ENCODE measurements at regions of chr1 and their contacts with region 1.

Region 1: GRCh38 chr1:113928941-113929749 is at the start of gene HIPK1:
- DNase-seq: peak; percentile 86 to 96 (median 93)
- ATAC-seq: peak; percentile 65
- H3K4me3 ChIP-seq: peak within 1 kb of the TSS; percentile 89 to 93
- H3K4me3 Mint-ChIP-seq: peak within 1 kb of the TSS; percentile 99
- H3K27ac ChIP-seq: peak within 1 kb of the TSS; percentile 97 to 99
- H3K27ac Mint-ChIP-seq: peak within 1 kb of the TSS; percentile 100
- H3K4me1 ChIP-seq: peaks cover 37% of the 10 kb centered on the region
- H3K4me1 Mint-ChIP-seq: peaks cover 52% of the 10 kb centered on the region
- H3K27me3 ChIP-seq: no peaks in the 10 kb centered on the region
- H3K27me3 Mint-ChIP-seq: no peaks in the 10 kb centered on the region
- CTCF ChIP-seq: no peak
- total RNA-seq, gene HIPK1: 301 to 312 TPM

Region 2: GRCh38 chr1:112619520-112620376 is 1309.4 kb before region 1 on chr1 and contains the start of gene CAPZA1:
- CTCF ChIA-PET with region 1: no interaction called
- POLR2A ChIA-PET with region 1: no interaction called
- intact Hi-C with region 1: loop called (anchors 5 to 10 kb)
- DNase-seq: peak; percentile 83 to 96 (median 89)
- ATAC-seq: peak; percentile 65
- H3K4me3 ChIP-seq: peak within 1 kb of the TSS; percentile 85 to 88
- H3K4me3 Mint-ChIP-seq: peak within 1 kb of the TSS; percentile 98
- H3K27ac ChIP-seq: peak within 1 kb of the TSS; percentile 98 to 100
- H3K27ac Mint-ChIP-seq: peak within 1 kb of the TSS; percentile 100
- H3K4me1 ChIP-seq: peaks cover 31% of the 10 kb centered on the region
- H3K4me1 Mint-ChIP-seq: peaks cover 44% of the 10 kb centered on the region
- H3K27me3 ChIP-seq: no peaks in the 10 kb centered on the region
- H3K27me3 Mint-ChIP-seq: no peaks in the 10 kb centered on the region
- CTCF ChIP-seq: no peak
- total RNA-seq, gene CAPZA1: 185 to 196 TPM

Region 3: GRCh38 chr1:113835642-113836307 is 93.4 kb before region 1 on chr1:
- CTCF ChIA-PET with region 1: interaction called, 12 read pairs
- POLR2A ChIA-PET with region 1: interaction called, 6 read pairs
- intact Hi-C with region 1: loop called (anchors 1 kb)
- DNase-seq: peak in 4 of 9 experiments; percentile 17 to 77 (median 54)
- ATAC-seq: no peak
- H3K4me3 ChIP-seq: no peak overlapping the region
- H3K4me3 Mint-ChIP-seq: no peak overlapping the region
- H3K27ac ChIP-seq: no peak overlapping the region
- H3K27ac Mint-ChIP-seq: no peak overlapping the region
- H3K4me1 ChIP-seq: no peaks in the 10 kb centered on the region
- H3K4me1 Mint-ChIP-seq: peaks cover 7% of the 10 kb centered on the region
- H3K27me3 ChIP-seq: no peaks in the 10 kb centered on the region
- H3K27me3 Mint-ChIP-seq: no peaks in the 10 kb centered on the region
- CTCF ChIP-seq: peak; percentile 86

Region 4: GRCh38 chr1:113904674-113905434 is 24.3 kb before region 1 on chr1 and contains the starts of genes AP4B1 and DCLRE1B:
- CTCF ChIA-PET with region 1: interaction called, 61 read pairs
- POLR2A ChIA-PET with region 1: interaction called, 119 read pairs
- intact Hi-C with region 1: loop called (anchors 1 kb)
- DNase-seq: peak; percentile 93 to 100 (median 95)
- ATAC-seq: peak; percentile 92
- H3K4me3 ChIP-seq: peak within 1 kb of the TSS; percentile 83 to 85
- H3K4me3 Mint-ChIP-seq: peak within 1 kb of the TSS; percentile 99
- H3K27ac ChIP-seq: peak within 1 kb of the TSS; percentile 92 to 96
- H3K27ac Mint-ChIP-seq: peak within 1 kb of the TSS; percentile 100
- H3K4me1 ChIP-seq: peaks cover 34% of the 10 kb centered on the region
- H3K4me1 Mint-ChIP-seq: peaks cover 62% of the 10 kb centered on the region
- H3K27me3 ChIP-seq: no peaks in the 10 kb centered on the region
- H3K27me3 Mint-ChIP-seq: no peaks in the 10 kb centered on the region
- CTCF ChIP-seq: peak; percentile 65
- total RNA-seq, gene AP4B1: 63.7 to 67.3 TPM
- total RNA-seq, gene DCLRE1B: 8.1 to 9.1 TPM

Region 5: GRCh38 chr1:113949007-113949406 is 19.9 kb after region 1 on chr1:
- CTCF ChIA-PET with region 1: interaction called, 53 read pairs
- POLR2A ChIA-PET with region 1: interaction called, 40 read pairs
- intact Hi-C with region 1: loop called (anchors 1 kb)
- DNase-seq: peak in 2 of 9 experiments; percentile 48 to 59
- ATAC-seq: no peak
- H3K4me3 ChIP-seq: no peak overlapping the region
- H3K4me3 Mint-ChIP-seq: peak overlapping the region; percentile 6
- H3K27ac ChIP-seq: peak overlapping the region; percentile 31 to 65
- H3K27ac Mint-ChIP-seq: peak overlapping the region; percentile 93
- H3K4me1 ChIP-seq: peaks cover 81% of the 10 kb centered on the region
- H3K4me1 Mint-ChIP-seq: peaks cover 82% of the 10 kb centered on the region
- H3K27me3 ChIP-seq: no peaks in the 10 kb centered on the region
- H3K27me3 Mint-ChIP-seq: no peaks in the 10 kb centered on the region
- CTCF ChIP-seq: peak; percentile 68

Region 6: DNA sequence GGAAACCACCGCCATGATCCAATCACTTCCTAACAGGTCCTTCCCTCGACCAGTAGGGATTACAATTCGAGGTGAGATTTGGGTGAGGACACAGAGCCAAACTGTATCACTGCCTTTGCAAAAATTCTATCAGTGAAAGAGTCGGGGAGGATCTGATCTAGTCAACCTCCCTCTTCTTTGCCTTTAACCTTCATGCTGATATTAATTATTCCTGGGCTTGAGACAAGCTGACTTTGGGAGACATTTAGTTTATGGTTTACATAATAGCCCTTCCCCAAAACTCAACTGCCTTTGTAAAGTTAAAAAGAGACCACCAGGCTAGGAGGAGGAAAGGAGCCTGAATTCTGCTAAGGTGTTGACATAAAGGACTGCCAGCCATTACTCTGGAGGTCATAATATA is 489.1 kb after region 1 on chr1:
- CTCF ChIA-PET with region 1: no interaction called
- POLR2A ChIA-PET with region 1: no interaction called
- intact Hi-C with region 1: no loop called
- DNase-seq: no peak
- ATAC-seq: no peak
- H3K4me3 ChIP-seq: no peak overlapping the region
- H3K4me3 Mint-ChIP-seq: no peak overlapping the region
- H3K27ac ChIP-seq: no peak overlapping the region
- H3K27ac Mint-ChIP-seq: no peak overlapping the region
- H3K4me1 ChIP-seq: no peaks in the 10 kb centered on the region
- H3K4me1 Mint-ChIP-seq: peaks cover 1% of the 10 kb centered on the region
- H3K27me3 ChIP-seq: no peaks in the 10 kb centered on the region
- H3K27me3 Mint-ChIP-seq: no peaks in the 10 kb centered on the region
- CTCF ChIP-seq: no peak

Region 7: DNA sequence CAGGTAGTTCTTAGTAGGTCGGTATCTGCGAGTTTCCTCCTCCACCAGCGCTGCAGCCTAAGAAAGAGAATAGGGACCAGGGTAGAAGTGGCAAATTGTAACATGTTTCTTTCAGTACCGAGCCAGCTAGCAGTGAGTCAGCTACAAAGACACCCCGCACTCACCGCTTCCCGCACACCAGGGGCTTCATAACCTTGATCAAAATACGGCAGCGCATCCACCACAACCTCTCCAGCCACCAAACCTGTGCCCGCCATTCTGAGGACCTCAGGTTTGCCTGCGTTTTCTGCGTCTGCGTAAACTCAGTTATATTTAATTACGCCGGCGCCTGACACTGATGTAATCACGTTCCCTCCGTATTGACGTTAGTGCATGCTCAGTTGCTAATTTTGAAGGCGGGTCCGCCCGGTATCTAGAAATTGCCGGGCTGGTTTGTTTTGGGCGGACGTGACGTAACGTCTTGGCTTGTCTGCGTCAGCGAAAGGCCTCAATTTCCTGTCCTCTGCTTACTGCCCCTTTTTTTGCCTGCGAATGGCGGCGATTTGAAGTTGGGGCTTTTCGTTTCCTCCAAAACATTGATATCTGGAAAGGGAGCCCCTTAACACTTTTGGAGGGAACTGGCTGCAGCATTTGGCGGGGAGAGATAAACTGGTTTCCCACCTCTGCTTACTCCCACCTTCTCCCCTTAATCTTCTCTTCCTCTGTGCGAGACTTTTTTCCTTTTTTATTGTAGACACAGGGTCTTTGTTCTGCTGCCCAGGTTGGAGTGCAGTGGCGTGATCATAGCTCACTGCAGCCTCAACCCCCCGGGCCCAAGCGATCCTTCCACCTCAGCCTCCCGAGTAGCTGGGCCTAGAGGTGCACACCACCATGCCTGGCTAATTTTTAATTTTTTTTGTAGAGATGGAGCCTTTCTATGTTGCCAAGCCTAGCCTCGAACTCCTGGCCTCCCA is 652.5 kb after region 1 on chr1 and contains the start of gene BCAS2:
- CTCF ChIA-PET with region 1: no interaction called
- POLR2A ChIA-PET with region 1: no interaction called
- intact Hi-C with region 1: loop called in 1 of 2 experiments (anchors 1 kb)
- DNase-seq: peak; percentile 90 to 99 (median 95)
- ATAC-seq: peak; percentile 95
- H3K4me3 ChIP-seq: peak within 1 kb of the TSS; percentile 56 to 72
- H3K4me3 Mint-ChIP-seq: peak within 1 kb of the TSS; percentile 96
- H3K27ac ChIP-seq: peak within 1 kb of the TSS; percentile 84 to 94
- H3K27ac Mint-ChIP-seq: peak within 1 kb of the TSS; percentile 99
- H3K4me1 ChIP-seq: peaks cover 22% of the 10 kb centered on the region
- H3K4me1 Mint-ChIP-seq: peaks cover 46% of the 10 kb centered on the region
- H3K27me3 ChIP-seq: no peaks in the 10 kb centered on the region
- H3K27me3 Mint-ChIP-seq: no peaks in the 10 kb centered on the region
- CTCF ChIP-seq: no peak
- total RNA-seq, gene BCAS2: 113 to 125 TPM